Gastrocnemius medialis (tissue), 4 donors: ENCODE measurements at regions of chr19 and their contacts with region 1.

Region 1: GRCh38 chr19:2269244-2269947 is 12.6 kb downstream of the PEAK3 start:
- DNase-seq: peak; percentile 97 to 99
- ATAC-seq: peak; percentile 82 to 89
- H3K4me3 ChIP-seq: peak overlapping the region; percentile 88 to 100 (median 98)
- H3K27ac ChIP-seq: peak overlapping the region; percentile 99 to 100 (median 100)
- H3K4me1 ChIP-seq: peaks cover 35 to 40% of the 10 kb centered on the region in 2 donors
- H3K27me3 ChIP-seq: no peaks in the 10 kb centered on the region
- CTCF ChIP-seq: peak in 4 of 5 experiments; percentile 26 to 66 (median 52)
- POLR2A ChIP-seq: peak; percentile 100

Region 2: GRCh38 chr19:2109278-2109864 is 160.0 kb before region 1 on chr19:
- in situ Hi-C with region 1: no loop called
- intact Hi-C with region 1: no loop called
- DNase-seq: no peak
- ATAC-seq: no peak
- H3K4me3 ChIP-seq: no peak overlapping the region
- H3K27ac ChIP-seq: no peak overlapping the region
- H3K4me1 ChIP-seq: no peaks in the 10 kb centered on the region
- H3K27me3 ChIP-seq: no peaks in the 10 kb centered on the region
- CTCF ChIP-seq: no peak
- POLR2A ChIP-seq: no peak

Region 3: GRCh38 chr19:2161688-2162053 is 107.7 kb before region 1 on chr19:
- in situ Hi-C with region 1: no loop called
- intact Hi-C with region 1: loop called (anchors 2 kb)
- DNase-seq: no peak
- ATAC-seq: no peak
- H3K4me3 ChIP-seq: no peak overlapping the region
- H3K27ac ChIP-seq: no peak overlapping the region
- H3K4me1 ChIP-seq: peaks cover 20 to 26% of the 10 kb centered on the region in 2 donors
- H3K27me3 ChIP-seq: no peaks in the 10 kb centered on the region
- CTCF ChIP-seq: no peak
- POLR2A ChIP-seq: no peak

Region 4: DNA sequence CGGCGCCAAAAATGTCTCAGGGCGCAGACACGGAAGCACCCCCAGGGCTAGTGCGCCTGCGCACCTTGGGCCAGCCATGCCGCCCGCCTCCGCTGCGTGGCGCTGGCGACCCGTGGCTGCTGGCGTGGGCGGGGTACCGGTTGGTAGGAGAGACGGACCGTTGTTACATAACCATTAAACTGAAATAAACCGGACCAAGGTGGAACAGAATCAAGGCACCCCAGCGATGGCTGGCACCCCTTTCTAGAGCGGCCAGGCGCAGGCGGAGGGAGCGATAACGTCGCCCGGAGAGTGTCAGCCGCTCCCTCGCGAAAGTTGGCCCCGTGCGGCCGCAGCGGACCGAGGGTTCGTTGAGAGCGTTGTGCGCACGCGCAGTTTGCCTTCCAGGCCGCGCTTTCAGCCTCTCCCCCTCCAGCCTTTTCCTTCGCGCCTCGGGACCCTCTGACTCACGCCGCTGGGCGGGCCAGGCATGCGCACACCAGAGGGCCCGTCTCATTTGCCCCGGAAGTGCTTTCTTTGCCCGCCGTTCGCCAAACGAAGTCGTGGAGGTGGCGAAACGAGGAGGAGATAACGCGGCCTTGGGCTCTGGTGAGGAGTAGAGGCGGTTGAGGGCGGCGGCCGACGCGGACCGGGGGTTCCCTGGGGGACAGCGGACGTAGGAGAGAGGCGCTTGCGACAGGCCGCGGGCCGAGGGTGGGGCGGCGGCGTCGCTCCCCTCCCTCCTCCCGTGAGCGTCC is 32.9 kb before region 1 on chr19 and contains the starts of genes PLEKHJ1 and SF3A2:
- in situ Hi-C with region 1: no loop called
- intact Hi-C with region 1: loop called (anchors 1 kb)
- DNase-seq: peak; percentile 95 to 97
- ATAC-seq: peak; percentile 83 to 90
- H3K4me3 ChIP-seq: peak within 1 kb of the TSS; percentile 67 to 94 (median 86)
- H3K27ac ChIP-seq: peak within 1 kb of the TSS; percentile 94 to 98 (median 97)
- H3K4me1 ChIP-seq: peaks cover 56 to 64% of the 10 kb centered on the region in 2 donors
- H3K27me3 ChIP-seq: no peaks in the 10 kb centered on the region
- CTCF ChIP-seq: peak; percentile 100
- POLR2A ChIP-seq: peak; percentile 75 to 92
- total RNA-seq, gene PLEKHJ1: 50.1 to 72.4 (median 61.6) TPM
- total RNA-seq, gene SF3A2: 23.9 to 29.2 (median 26.5) TPM

Region 5: GRCh38 chr19:2328401-2329148 is 59.2 kb after region 1 on chr19 and contains the starts of genes LSM7 and SPPL2B:
- in situ Hi-C with region 1: no loop called
- intact Hi-C with region 1: loop called (anchors 5 kb)
- DNase-seq: peak; percentile 82 to 89
- ATAC-seq: peak; percentile 54 to 77
- H3K4me3 ChIP-seq: peak within 1 kb of the TSS; percentile 73 to 84 (median 78)
- H3K27ac ChIP-seq: peak within 1 kb of the TSS; percentile 81 to 96 (median 91)
- H3K4me1 ChIP-seq: peaks cover 55% of the 10 kb centered on the region in 2 donors
- H3K27me3 ChIP-seq: no peaks in the 10 kb centered on the region
- CTCF ChIP-seq: peak in 1 of 5 experiments; percentile 10
- POLR2A ChIP-seq: peak; percentile 97
- total RNA-seq, gene LSM7: 70.0 to 109 (median 77.5) TPM
- total RNA-seq, gene SPPL2B: 18.1 to 27.7 (median 23.2) TPM